Activated CD8-positive, alpha-beta T cell treated with anti-CD3 and anti-CD28 coated beads for 36 hours (primary cell): ENCODE measurements at regions of chr2 and their contacts with region 1.

Region 1: GRCh38 chr2:171587567-171587966 is 65.3 kb downstream of the CYBRD1 start:
- DNase-seq: no peak
- ATAC-seq: no peak
- H3K4me3 Mint-ChIP-seq: no peak overlapping the region
- H3K27ac Mint-ChIP-seq: no peak overlapping the region
- H3K4me1 Mint-ChIP-seq: no peaks in the 10 kb centered on the region
- H3K27me3 Mint-ChIP-seq: peaks cover 10% of the 10 kb centered on the region
- CTCF ChIP-seq: no peak

Region 2: GRCh38 chr2:171574149-171574795 is 13.3 kb before region 1 on chr2:
- CTCF ChIA-PET with region 1: interaction called, 16 read pairs
- POLR2A ChIA-PET with region 1: no interaction called
- intact Hi-C with region 1: no loop called
- DNase-seq: peak; percentile 86
- ATAC-seq: peak; percentile 100
- H3K4me3 Mint-ChIP-seq: no peak overlapping the region
- H3K27ac Mint-ChIP-seq: no peak overlapping the region
- H3K4me1 Mint-ChIP-seq: peaks cover 4% of the 10 kb centered on the region
- H3K27me3 Mint-ChIP-seq: no peaks in the 10 kb centered on the region
- CTCF ChIP-seq: peak; percentile 95